ENCODE measurements at regions of chr4 and their contacts with region 1.

Region 1: GRCh38 chr4:41281038-41281634 is 24.4 kb downstream of the UCHL1 start:
- DNase-seq: peak; percentile 77
- ATAC-seq: peak; percentile 98
- H3K4me3 ChIP-seq: no peak overlapping the region
- H3K27ac ChIP-seq: no peak overlapping the region
- H3K4me1 ChIP-seq: peaks cover 2% of the 10 kb centered on the region; the same call in 1 of the 2 replicates
- H3K27me3 ChIP-seq: no peaks in the 10 kb centered on the region
- CTCF ChIP-seq: peak; percentile 94
- POLR2A ChIP-seq: no peak
- RAD21 ChIP-seq: peak; percentile 98

Region 2: DNA sequence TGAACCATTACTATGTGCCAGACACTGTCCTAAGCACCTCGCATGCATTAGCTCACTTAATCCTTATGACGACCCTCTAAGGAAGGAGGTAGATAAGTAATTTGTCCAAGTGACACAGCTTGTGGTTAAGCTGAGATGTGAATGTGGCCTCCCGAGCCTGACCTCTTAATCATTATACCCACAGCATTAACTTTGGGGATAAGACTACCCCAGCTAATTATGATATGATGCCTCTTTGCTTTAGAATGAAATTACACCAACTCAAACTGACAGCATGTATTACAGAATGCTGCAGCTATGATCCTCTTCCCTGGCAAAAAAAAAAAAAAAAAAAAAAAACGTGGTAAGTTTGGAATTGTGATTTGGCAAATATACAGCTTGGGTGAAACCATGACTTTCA is 120.3 kb before region 1 on chr4:
- CTCF ChIA-PET with region 1: no interaction called
- POLR2A ChIA-PET with region 1: no interaction called
- dilution Hi-C with region 1: no loop called
- in situ Hi-C with region 1: no loop called
- intact Hi-C with region 1: no loop called
- DNase-seq: peak; percentile 34
- ATAC-seq: no peak; the same call in 1 of the 2 replicates
- H3K4me3 ChIP-seq: no peak overlapping the region
- H3K27ac ChIP-seq: no peak overlapping the region
- H3K4me1 ChIP-seq: peaks cover 16% of the 10 kb centered on the region
- H3K27me3 ChIP-seq: no peaks in the 10 kb centered on the region
- CTCF ChIP-seq: no peak
- POLR2A ChIP-seq: no peak
- RAD21 ChIP-seq: no peak

Region 3: DNA sequence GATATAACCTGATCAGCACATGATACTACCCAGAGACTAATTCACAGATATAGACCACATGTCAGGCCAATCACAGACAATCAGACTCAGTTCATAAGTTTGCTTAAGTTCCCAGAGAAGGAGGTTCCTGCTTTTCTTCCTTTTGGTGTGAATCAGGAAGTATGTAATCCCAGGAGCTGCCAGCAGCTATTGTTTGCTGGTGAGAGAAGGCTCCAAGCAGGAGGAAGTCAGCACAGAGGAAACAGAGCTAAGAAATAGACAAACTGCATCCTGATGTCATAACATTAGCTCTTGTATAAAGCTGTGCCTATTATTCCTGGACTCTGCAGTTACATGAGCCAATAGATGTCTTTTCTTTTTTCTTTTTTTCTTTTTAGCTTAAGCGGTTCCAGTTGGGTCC is 26.5 kb after region 1 on chr4:
- CTCF ChIA-PET with region 1: no interaction called
- POLR2A ChIA-PET with region 1: no interaction called
- dilution Hi-C with region 1: no loop called
- in situ Hi-C with region 1: no loop called
- intact Hi-C with region 1: no loop called
- DNase-seq: no peak
- ATAC-seq: no peak
- H3K4me3 ChIP-seq: no peak overlapping the region
- H3K27ac ChIP-seq: no peak overlapping the region
- H3K4me1 ChIP-seq: no peaks in the 10 kb centered on the region
- H3K27me3 ChIP-seq: peaks cover 7% of the 10 kb centered on the region
- CTCF ChIP-seq: no peak
- POLR2A ChIP-seq: no peak
- RAD21 ChIP-seq: no peak

Region 4: GRCh38 chr4:41644288-41644914 is 363.3 kb after region 1 on chr4:
- CTCF ChIA-PET with region 1: interaction called, 3 read pairs
- POLR2A ChIA-PET with region 1: no interaction called
- dilution Hi-C with region 1: no loop called
- in situ Hi-C with region 1: no loop called
- intact Hi-C with region 1: loop called (anchors 1 kb)
- DNase-seq: peak; percentile 16
- ATAC-seq: peak; percentile 82
- H3K4me3 ChIP-seq: no peak overlapping the region
- H3K27ac ChIP-seq: no peak overlapping the region
- H3K4me1 ChIP-seq: no peaks in the 10 kb centered on the region
- H3K27me3 ChIP-seq: peaks cover 20% of the 10 kb centered on the region
- CTCF ChIP-seq: peak; percentile 52
- POLR2A ChIP-seq: no peak
- RAD21 ChIP-seq: peak; percentile 46

Region 5: GRCh38 chr4:41652971-41653370 is 371.8 kb after region 1 on chr4:
- CTCF ChIA-PET with region 1: no interaction called
- POLR2A ChIA-PET with region 1: no interaction called
- dilution Hi-C with region 1: no loop called
- in situ Hi-C with region 1: loop called (anchors 5 kb)
- intact Hi-C with region 1: no loop called
- DNase-seq: no peak
- ATAC-seq: no peak
- H3K4me3 ChIP-seq: no peak overlapping the region
- H3K27ac ChIP-seq: no peak overlapping the region
- H3K4me1 ChIP-seq: peaks cover 6% of the 10 kb centered on the region
- H3K27me3 ChIP-seq: peaks cover 9% of the 10 kb centered on the region
- CTCF ChIP-seq: no peak
- POLR2A ChIP-seq: no peak
- RAD21 ChIP-seq: no peak

Region 6: GRCh38 chr4:41661442-41662076 is 380.4 kb after region 1 on chr4:
- CTCF ChIA-PET with region 1: interaction called, 26 read pairs
- POLR2A ChIA-PET with region 1: no interaction called
- dilution Hi-C with region 1: no loop called
- in situ Hi-C with region 1: no loop called
- intact Hi-C with region 1: loop called (anchors 1 kb)
- DNase-seq: peak; percentile 48
- ATAC-seq: peak; percentile 91
- H3K4me3 ChIP-seq: no peak overlapping the region
- H3K27ac ChIP-seq: no peak overlapping the region
- H3K4me1 ChIP-seq: peaks cover 4% of the 10 kb centered on the region; the same call in 1 of the 2 replicates
- H3K27me3 ChIP-seq: peaks cover 4% of the 10 kb centered on the region
- CTCF ChIP-seq: peak; percentile 89
- POLR2A ChIP-seq: no peak
- RAD21 ChIP-seq: peak; percentile 78

Region 7: GRCh38 chr4:41882625-41883347 is 601.6 kb after region 1 on chr4:
- CTCF ChIA-PET with region 1: no interaction called
- POLR2A ChIA-PET with region 1: no interaction called
- dilution Hi-C with region 1: no loop called
- in situ Hi-C with region 1: loop called (anchors 10 kb)
- intact Hi-C with region 1: loop called (anchors 1 kb)
- DNase-seq: peak; percentile 23
- ATAC-seq: peak; percentile 88
- H3K4me3 ChIP-seq: no peak overlapping the region
- H3K27ac ChIP-seq: no peak overlapping the region
- H3K4me1 ChIP-seq: no peaks in the 10 kb centered on the region
- H3K27me3 ChIP-seq: peaks cover 76% of the 10 kb centered on the region
- CTCF ChIP-seq: peak; percentile 81
- POLR2A ChIP-seq: no peak
- RAD21 ChIP-seq: peak; percentile 67

Region 8: GRCh38 chr4:41887821-41888686 is 606.9 kb after region 1 on chr4:
- CTCF ChIA-PET with region 1: no interaction called
- POLR2A ChIA-PET with region 1: no interaction called
- dilution Hi-C with region 1: no loop called
- in situ Hi-C with region 1: loop called (anchors 10 kb)
- intact Hi-C with region 1: loop called (anchors 1 kb)
- DNase-seq: peak; percentile 64
- ATAC-seq: no peak
- H3K4me3 ChIP-seq: no peak overlapping the region
- H3K27ac ChIP-seq: no peak overlapping the region
- H3K4me1 ChIP-seq: no peaks in the 10 kb centered on the region
- H3K27me3 ChIP-seq: peaks cover 37% of the 10 kb centered on the region
- CTCF ChIP-seq: peak; percentile 86
- POLR2A ChIP-seq: no peak
- RAD21 ChIP-seq: peak; percentile 68

Region 9: GRCh38 chr4:41949531-41949930 is 668.4 kb after region 1 on chr4:
- CTCF ChIA-PET with region 1: no interaction called
- POLR2A ChIA-PET with region 1: no interaction called
- dilution Hi-C with region 1: no loop called
- in situ Hi-C with region 1: no loop called
- intact Hi-C with region 1: no loop called
- DNase-seq: no peak
- ATAC-seq: no peak
- H3K4me3 ChIP-seq: no peak overlapping the region
- H3K27ac ChIP-seq: no peak overlapping the region
- H3K4me1 ChIP-seq: no peaks in the 10 kb centered on the region
- H3K27me3 ChIP-seq: no peaks in the 10 kb centered on the region
- CTCF ChIP-seq: no peak
- POLR2A ChIP-seq: no peak
- RAD21 ChIP-seq: no peak

Measured in IMR-90 (cell line).